ENCODE measurements at regions of chr14 and their contacts with region 1.

Region 1: GRCh38 chr14:43687921-43688320 is 819.2 kb downstream of the FSCB start:
- DNase-seq: no peak

Region 2: GRCh38 chr14:42455544-42455943 is 1232.4 kb before region 1 on chr14:
- intact Hi-C with region 1: loop called in 1 of 2 experiments (anchors 5 kb)
- DNase-seq: no peak

Region 3: DNA sequence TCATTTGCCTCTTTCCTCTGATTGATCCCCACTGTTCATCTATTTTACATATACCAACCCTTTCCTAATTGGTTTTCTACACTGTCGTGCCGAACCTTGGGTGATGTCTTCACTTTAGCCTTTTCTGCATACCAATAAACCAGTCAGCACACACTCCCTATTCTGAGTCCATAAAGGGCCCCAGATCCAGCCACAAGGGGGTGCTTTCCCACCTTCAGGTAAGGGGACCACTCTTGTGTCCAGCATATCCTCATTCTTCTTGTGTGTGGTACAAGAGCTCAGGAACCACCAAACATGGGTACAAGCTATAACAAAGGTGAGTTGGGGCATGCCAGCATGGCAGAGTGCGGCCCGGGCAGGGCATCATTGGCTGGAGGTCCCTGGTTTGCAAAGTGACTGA is 40.6 kb before region 1 on chr14:
- intact Hi-C with region 1: loop called in 1 of 2 experiments (anchors 1 kb)
- DNase-seq: no peak